Ascending aorta (tissue), 2 donors: ENCODE measurements at regions of chr12 and their contacts with region 1.

Region 1: GRCh38 chr12:480831-481816 is 21.4 kb downstream of the B4GALNT3 start:
- DNase-seq: peak; percentile 73 to 95
- H3K4me3 ChIP-seq: peak overlapping the region in 1 of 2 donors; percentile 30
- H3K27ac ChIP-seq: peak overlapping the region; percentile 94 to 98
- H3K4me1 ChIP-seq: peaks cover 3 to 26% of the 10 kb centered on the region in 2 donors
- H3K27me3 ChIP-seq: no peaks in the 10 kb centered on the region
- CTCF ChIP-seq: peak in 1 of 3 experiments; percentile 5

Region 2: GRCh38 chr12:459430-460258 is 21.5 kb before region 1 on chr12 and contains the start of gene B4GALNT3:
- intact Hi-C with region 1: loop called (anchors 2 kb)
- DNase-seq: peak; percentile 23 to 86
- H3K4me3 ChIP-seq: peak within 1 kb of the TSS; percentile 85 to 92
- H3K27ac ChIP-seq: peak within 1 kb of the TSS; percentile 81 to 90
- H3K4me1 ChIP-seq: peaks cover 5 to 12% of the 10 kb centered on the region in 2 donors
- H3K27me3 ChIP-seq: no peaks in the 10 kb centered on the region
- CTCF ChIP-seq: no peak
- total RNA-seq, gene B4GALNT3: 10.4 TPM

Region 3: GRCh38 chr12:467591-467990 is 13.5 kb before region 1 on chr12:
- intact Hi-C with region 1: loop called (anchors 1 kb)
- DNase-seq: peak in 1 of 2 donors; percentile 46
- H3K4me3 ChIP-seq: no peak overlapping the region
- H3K27ac ChIP-seq: peak overlapping the region; percentile 79 to 83
- H3K4me1 ChIP-seq: peaks cover 8 to 44% of the 10 kb centered on the region in 2 donors
- H3K27me3 ChIP-seq: no peaks in the 10 kb centered on the region
- CTCF ChIP-seq: no peak

Region 4: GRCh38 chr12:530308-530707 is 49.2 kb after region 1 on chr12:
- intact Hi-C with region 1: no loop called
- DNase-seq: no peak
- H3K4me3 ChIP-seq: no peak overlapping the region
- H3K27ac ChIP-seq: peak overlapping the region in 1 of 2 donors; percentile 54
- H3K4me1 ChIP-seq: no peaks in the 10 kb centered on the region
- H3K27me3 ChIP-seq: no peaks in the 10 kb centered on the region
- CTCF ChIP-seq: no peak

Region 5: GRCh38 chr12:607526-608001 is 126.4 kb after region 1 on chr12:
- intact Hi-C with region 1: no loop called
- DNase-seq: peak in 1 of 2 donors; percentile 65
- H3K4me3 ChIP-seq: no peak overlapping the region
- H3K27ac ChIP-seq: peak overlapping the region; percentile 52 to 77
- H3K4me1 ChIP-seq: peaks cover 6 to 26% of the 10 kb centered on the region in 2 donors
- H3K27me3 ChIP-seq: no peaks in the 10 kb centered on the region
- CTCF ChIP-seq: no peak

Region 6: GRCh38 chr12:630656-631632 is 149.8 kb after region 1 on chr12:
- intact Hi-C with region 1: loop called (anchors 10 kb)
- DNase-seq: peak in 1 of 2 donors; percentile 83
- H3K4me3 ChIP-seq: peak overlapping the region; percentile 16 to 22
- H3K27ac ChIP-seq: peak overlapping the region; percentile 80 to 84
- H3K4me1 ChIP-seq: peaks cover 0 to 37% of the 10 kb centered on the region in 2 donors
- H3K27me3 ChIP-seq: no peaks in the 10 kb centered on the region
- CTCF ChIP-seq: no peak